SK-N-SH (cell line): ENCODE measurements at regions of chr20 and their contacts with region 1.

Region 1: DNA sequence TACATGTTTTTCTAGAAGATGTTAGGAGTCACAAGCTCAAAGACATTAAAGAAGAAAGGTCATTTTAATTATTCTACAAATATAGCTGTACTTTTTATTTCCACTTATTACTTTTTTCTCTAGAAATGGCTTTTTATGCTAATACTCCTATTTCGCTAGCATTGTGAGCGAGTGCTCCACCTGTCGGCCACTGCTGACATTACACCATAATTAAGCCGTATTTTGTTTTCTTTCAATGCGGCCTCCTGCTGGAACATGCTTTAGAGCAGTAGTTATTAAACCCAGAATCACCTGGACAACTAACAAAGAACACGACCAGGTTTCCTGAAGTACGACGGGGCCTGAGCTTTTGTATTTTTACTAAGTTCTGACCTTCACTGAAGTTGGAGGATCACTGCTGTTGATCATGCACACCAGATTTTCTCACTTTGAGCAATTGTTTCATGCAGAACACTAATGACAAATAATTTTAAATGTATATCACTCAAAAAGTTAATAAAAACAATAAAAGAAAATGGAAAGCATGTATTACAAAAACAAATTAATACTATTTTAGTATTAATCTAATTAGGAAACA is 74.1 kb upstream of the PAK5 start:
- DNase-seq: peak; percentile 50
- H3K4me3 ChIP-seq: no peak overlapping the region
- H3K27ac ChIP-seq: no peak overlapping the region; a peak in 1 of 4 replicates
- H3K4me1 ChIP-seq: no peaks in the 10 kb centered on the region
- H3K27me3 ChIP-seq: peaks cover 2% of the 10 kb centered on the region; the same call in 1 of the 2 replicates
- CTCF ChIP-seq: peak; percentile 97
- EP300 ChIP-seq: no peak
- RAD21 ChIP-seq: peak; percentile 67

Region 2: DNA sequence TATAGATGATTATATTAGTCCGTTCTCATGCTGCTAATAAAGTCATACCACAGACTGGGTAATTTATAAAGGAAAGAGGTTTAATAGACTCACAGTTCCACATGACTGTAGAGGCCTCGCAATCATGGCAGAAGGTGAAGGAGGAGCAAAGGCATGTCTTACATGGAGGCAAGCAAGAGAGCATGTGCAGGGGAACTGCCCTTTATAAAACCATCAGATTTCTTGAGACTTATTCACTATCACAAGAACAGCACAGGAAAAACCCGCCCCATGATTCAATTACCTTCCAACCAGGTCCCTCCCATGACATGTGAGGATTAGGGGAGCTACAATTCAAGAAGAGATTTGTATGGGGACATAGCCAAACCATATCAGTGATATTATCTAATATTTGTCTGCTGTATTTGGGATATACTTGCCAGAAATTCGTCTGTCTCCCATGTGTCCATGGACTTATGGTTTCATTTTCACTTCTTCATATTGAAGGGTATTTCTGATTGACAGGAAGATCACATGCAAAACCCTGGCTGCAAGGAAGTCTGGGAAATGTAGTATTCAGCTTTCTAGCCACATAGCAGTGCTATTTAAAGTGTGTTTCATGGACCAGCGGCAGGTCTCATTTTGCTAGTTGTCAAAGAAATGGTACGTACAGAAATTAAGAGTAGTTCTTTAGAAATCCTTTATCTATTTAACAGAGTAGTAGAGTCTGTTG is 23.5 kb before region 1 on chr20:
- CTCF ChIA-PET with region 1: interaction called, 16 read pairs
- POLR2A ChIA-PET with region 1: no interaction called
- DNase-seq: no peak
- H3K4me3 ChIP-seq: no peak overlapping the region
- H3K27ac ChIP-seq: no peak overlapping the region
- H3K4me1 ChIP-seq: no peaks in the 10 kb centered on the region
- H3K27me3 ChIP-seq: no peaks in the 10 kb centered on the region
- CTCF ChIP-seq: no peak
- EP300 ChIP-seq: no peak
- RAD21 ChIP-seq: no peak

Region 3: DNA sequence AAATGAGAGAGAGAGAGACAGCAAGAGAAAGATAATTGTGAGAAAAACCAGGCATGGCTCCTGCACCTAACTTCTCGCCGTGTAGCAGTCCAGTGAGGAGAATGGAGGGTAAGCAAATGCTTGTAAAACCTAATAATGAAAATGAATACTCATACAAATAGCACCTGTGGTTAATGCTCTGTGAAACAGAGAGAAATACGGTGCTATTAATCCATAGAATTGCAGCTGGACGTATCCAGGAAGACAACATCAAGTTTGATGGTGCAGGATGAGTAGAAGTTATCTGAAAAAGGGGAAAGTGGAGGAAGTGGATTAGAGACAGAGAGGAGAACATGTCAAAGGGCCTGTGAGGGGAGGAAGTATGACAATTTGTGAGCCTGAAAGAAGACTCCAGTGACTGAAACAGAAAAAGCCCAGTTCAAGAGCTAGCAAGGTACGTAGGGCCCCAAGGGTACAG is 15.4 kb after region 1 on chr20:
- CTCF ChIA-PET with region 1: interaction called, 57 read pairs
- POLR2A ChIA-PET with region 1: no interaction called
- DNase-seq: no peak
- H3K4me3 ChIP-seq: no peak overlapping the region
- H3K27ac ChIP-seq: no peak overlapping the region
- H3K4me1 ChIP-seq: peaks cover 0 to 3% of the 10 kb centered on the region in 2 experiments; a peak in 2 of 4 replicates
- H3K27me3 ChIP-seq: no peaks in the 10 kb centered on the region
- CTCF ChIP-seq: no peak
- EP300 ChIP-seq: no peak
- RAD21 ChIP-seq: no peak

Region 4: DNA sequence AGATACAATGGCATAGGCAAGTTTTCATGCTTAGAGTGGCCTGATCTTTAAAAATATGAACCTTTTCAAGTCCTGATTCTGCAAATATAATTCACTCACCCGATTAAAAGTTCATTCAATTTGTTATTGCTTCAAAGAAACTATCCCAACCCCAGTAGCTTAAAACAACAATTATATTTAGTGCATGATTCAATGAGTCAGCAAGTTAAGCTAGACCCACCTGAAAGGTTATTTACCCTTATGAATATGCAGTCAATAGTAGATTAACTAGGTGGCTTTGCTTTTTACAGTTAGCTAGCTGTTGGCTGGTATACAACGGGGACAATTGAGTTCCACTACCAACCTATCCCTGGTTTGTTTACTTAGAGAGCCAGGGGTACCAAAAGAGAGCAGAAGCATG is 26.3 kb after region 1 on chr20:
- CTCF ChIA-PET with region 1: no interaction called
- POLR2A ChIA-PET with region 1: no interaction called
- DNase-seq: no peak
- H3K4me3 ChIP-seq: no peak overlapping the region
- H3K27ac ChIP-seq: no peak overlapping the region
- H3K4me1 ChIP-seq: no peaks in the 10 kb centered on the region
- H3K27me3 ChIP-seq: no peaks in the 10 kb centered on the region
- CTCF ChIP-seq: no peak
- EP300 ChIP-seq: no peak
- RAD21 ChIP-seq: no peak